Heart right ventricle (tissue), 16 donors: ENCODE measurements at regions of chr1 and their contacts with region 1.

Region 1: DNA sequence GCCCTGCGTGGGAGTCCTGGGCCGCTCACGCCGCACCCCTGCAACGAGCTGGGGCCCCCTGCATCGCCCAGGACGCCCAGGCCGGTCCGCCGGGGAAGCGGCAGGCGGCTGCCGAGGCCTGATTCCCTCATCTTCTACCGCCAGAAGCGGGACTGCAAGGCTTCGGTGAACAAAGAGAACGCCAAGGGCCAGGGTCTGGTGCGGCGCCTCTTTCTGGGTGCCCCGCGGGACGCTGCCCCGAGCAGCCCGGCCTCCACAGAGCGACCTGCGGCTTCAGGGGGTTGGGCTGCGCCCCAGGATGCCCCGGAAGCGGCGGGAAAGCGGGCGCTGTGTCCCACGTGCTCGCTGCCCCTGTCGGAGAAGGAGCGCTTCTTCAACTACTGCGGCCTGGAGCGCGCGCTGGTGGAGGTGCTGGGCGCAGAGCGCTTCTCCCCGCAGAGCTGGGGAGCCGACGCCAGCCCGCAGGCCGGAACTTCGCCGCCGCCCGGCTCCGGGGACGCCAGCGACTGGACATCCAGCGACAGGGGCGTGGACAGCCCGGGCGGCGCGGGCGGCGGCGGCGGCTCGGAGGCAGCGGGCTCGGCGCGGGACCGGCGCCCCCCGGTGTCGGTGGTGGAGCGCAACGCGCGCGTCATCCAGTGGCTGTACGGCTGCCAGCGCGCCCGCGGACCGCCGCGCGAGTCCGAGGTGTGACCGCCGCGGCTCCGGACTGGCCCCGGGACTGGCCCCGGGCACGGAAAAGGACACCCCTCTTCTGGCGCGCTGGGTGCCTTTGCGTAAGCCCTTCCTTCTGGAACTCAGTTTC is 2.7 kb downstream of the FAM110D start:
- DNase-seq: peak; percentile 60 to 79
- ATAC-seq: peak; percentile 19 to 65 (median 48)
- H3K4me3 ChIP-seq: peak overlapping the region; percentile 29 to 70 (median 60)
- H3K27ac ChIP-seq: peak overlapping the region; percentile 85 to 97 (median 93)
- H3K4me1 ChIP-seq: peaks cover 27 to 76% (median 58%) of the 10 kb centered on the region in 9 donors
- H3K27me3 ChIP-seq: peaks cover 0 to 66% (median 0%) of the 10 kb centered on the region in 7 donors
- CTCF ChIP-seq: peak in 5 of 9 donors; percentile 13 to 53 (median 41)

Region 2: GRCh38 chr1:25895365-25895993 is 266.1 kb before region 1 on chr1:
- intact Hi-C with region 1: loop called in 1 of 10 experiments (anchors 10 kb)
- DNase-seq: peak; percentile 90 to 91
- ATAC-seq: peak; percentile 94 to 99 (median 95)
- H3K4me3 ChIP-seq: peak overlapping the region in 3 of 10 donors; percentile 3 to 17 (median 7)
- H3K27ac ChIP-seq: peak overlapping the region in 1 of 10 donors; percentile 31
- H3K4me1 ChIP-seq: peaks cover 0 to 17% (median 9%) of the 10 kb centered on the region in 9 donors
- H3K27me3 ChIP-seq: no peaks in the 10 kb centered on the region
- CTCF ChIP-seq: peak; percentile 97 to 100 (median 99)

Region 3: GRCh38 chr1:26203642-26204318 is 42.2 kb after region 1 on chr1:
- intact Hi-C with region 1: no loop called
- DNase-seq: no peak
- ATAC-seq: no peak
- H3K4me3 ChIP-seq: no peak overlapping the region
- H3K27ac ChIP-seq: no peak overlapping the region
- H3K4me1 ChIP-seq: peaks cover 0 to 12% (median 0%) of the 10 kb centered on the region in 9 donors
- H3K27me3 ChIP-seq: no peaks in the 10 kb centered on the region
- CTCF ChIP-seq: no peak

Region 4: GRCh38 chr1:26373281-26373680 is 211.7 kb after region 1 on chr1:
- intact Hi-C with region 1: no loop called
- DNase-seq: no peak
- ATAC-seq: no peak
- H3K4me3 ChIP-seq: no peak overlapping the region
- H3K27ac ChIP-seq: peak overlapping the region in 1 of 10 donors; percentile 16
- H3K4me1 ChIP-seq: peaks cover 0 to 46% (median 0%) of the 10 kb centered on the region in 9 donors
- H3K27me3 ChIP-seq: peaks cover 0 to 37% (median 17%) of the 10 kb centered on the region in 7 donors
- CTCF ChIP-seq: no peak

Region 5: DNA sequence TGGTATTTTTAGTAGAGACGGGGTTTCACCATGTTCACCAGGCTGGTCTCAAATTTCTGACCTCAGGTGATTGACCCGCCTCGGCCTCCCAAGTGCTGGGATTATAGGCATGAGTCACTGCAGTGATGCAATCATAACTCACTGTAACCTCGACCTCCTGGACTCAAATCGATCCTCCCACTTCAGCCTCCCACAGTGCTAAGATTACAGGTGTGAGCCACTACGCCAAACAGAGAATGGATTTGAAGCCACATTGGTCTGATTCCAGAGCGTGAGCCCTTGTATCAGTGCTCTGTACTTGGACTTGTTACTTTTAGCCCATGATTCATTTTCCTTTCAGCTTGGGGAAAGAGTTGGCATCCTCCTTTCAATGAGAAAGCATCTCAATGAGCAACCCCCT is 225.8 kb after region 1 on chr1:
- intact Hi-C with region 1: no loop called
- DNase-seq: no peak
- ATAC-seq: no peak
- H3K4me3 ChIP-seq: no peak overlapping the region
- H3K27ac ChIP-seq: no peak overlapping the region
- H3K4me1 ChIP-seq: peaks cover 0 to 9% (median 0%) of the 10 kb centered on the region in 9 donors
- H3K27me3 ChIP-seq: peaks cover 0 to 42% (median 12%) of the 10 kb centered on the region in 7 donors
- CTCF ChIP-seq: no peak